ENCODE measurements at regions of chr17 and their contacts with region 1.

Region 1: DNA sequence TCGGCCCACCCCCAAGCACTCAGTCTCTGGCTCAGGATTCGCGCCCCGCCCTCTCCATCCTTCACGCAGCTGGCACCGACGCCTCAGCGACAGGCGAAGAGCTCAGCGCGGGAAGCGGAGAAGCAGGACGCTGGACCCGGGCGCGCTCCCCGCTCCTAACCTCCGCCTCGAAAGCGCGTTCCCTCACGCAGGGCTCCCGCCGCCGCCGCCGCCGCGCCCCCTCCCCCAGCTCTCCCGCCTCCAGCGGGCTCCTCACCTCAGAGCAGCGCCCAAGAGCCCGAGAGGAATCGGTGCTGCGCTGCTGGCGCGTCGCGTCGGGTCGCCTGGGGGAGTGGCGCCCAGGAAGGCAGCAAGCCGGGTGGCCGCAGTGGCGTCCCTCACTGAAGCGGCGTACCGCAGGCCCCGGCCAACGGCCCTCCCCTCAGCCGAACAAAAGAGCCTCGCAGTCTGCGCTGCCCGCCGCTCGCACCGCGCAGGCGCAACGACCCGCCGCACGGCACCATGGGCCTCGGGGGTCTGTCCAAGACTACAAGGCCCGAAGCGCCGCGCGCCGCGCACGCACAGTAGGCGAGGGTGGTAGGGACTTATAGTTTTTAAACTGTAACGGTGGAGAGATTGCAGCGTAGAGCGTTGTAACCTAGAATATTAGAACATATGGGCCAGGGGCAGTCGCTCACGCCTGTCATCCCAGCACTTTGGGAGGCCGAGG is at the start of gene CBX1:
- DNase-seq: peak; percentile 87 to 95 (median 93)
- ATAC-seq: peak; percentile 98
- H3K4me3 ChIP-seq: peak within 1 kb of the TSS; percentile 78
- H3K4me3 Mint-ChIP-seq: peak within 1 kb of the TSS; percentile 83 to 95 (median 91)
- H3K27ac ChIP-seq: peak within 1 kb of the TSS; percentile 68
- H3K27ac Mint-ChIP-seq: peak within 1 kb of the TSS; percentile 78 to 94 (median 89)
- H3K4me1 ChIP-seq: peaks cover 6 to 11% of the 10 kb centered on the region in 2 donors
- H3K4me1 Mint-ChIP-seq: peaks cover 17 to 60% (median 54%) of the 10 kb centered on the region in 7 donors
- H3K27me3 ChIP-seq: no peaks in the 10 kb centered on the region
- H3K27me3 Mint-ChIP-seq: no peaks in the 10 kb centered on the region
- total RNA-seq, gene CBX1: 16.4 to 56.7 (median 33.5) TPM

Region 2: DNA sequence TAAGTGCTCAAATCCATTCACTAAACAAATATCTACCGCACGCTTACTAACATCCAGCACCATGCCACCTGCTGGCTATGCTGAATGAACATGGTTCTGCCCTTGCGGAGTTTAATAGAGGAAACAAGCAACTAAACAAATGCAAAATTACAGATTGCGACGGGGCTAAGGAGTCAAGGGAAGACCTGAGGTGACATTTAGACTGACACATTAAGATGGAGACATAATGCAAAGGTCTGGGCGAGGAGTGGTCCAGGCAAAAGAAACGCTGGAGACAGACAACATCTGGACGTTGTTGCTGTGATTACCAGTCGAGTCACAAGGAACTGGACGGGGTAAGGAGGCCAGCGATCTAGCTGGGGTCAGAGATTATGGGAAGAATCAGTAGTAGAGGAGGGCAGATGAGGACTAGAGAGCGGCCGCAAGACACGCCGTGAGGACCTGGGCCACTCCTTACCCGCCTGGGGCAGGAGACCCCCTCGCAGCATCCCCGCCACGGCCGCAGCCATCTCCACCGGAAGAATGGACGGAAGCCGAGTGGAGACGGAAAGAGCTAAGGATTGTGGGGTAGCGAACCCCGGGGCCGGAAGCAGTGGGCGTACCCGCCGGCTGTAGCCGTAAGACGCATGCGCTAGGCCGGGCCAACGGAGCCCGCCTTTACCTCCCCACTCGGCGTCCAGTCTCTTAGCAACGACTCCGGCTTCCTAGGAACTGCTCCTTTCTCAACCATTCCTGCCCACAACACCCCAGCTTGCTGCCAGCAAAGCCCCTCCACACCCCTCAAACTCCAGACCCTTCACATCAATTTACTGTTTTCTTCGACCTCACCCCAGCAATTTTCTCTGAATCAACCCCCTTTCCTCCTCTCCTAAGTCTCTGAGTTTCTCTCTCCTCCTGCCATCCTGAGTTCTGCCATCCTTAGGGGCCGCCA is 269.9 kb before region 1 on chr17 and contains the starts of genes LRRC46 and MRPL10:
- CTCF ChIA-PET with region 1: no interaction called
- POLR2A ChIA-PET with region 1: no interaction called
- intact Hi-C with region 1: loop called in 1 of 2 experiments (anchors 2 kb)
- DNase-seq: peak; percentile 79 to 96 (median 91)
- ATAC-seq: peak; percentile 88
- H3K4me3 ChIP-seq: peak within 1 kb of the TSS; percentile 99
- H3K4me3 Mint-ChIP-seq: peak within 1 kb of the TSS; percentile 89 to 98 (median 92)
- H3K27ac ChIP-seq: peak within 1 kb of the TSS; percentile 77
- H3K27ac Mint-ChIP-seq: peak within 1 kb of the TSS; percentile 76 to 96 (median 92)
- H3K4me1 ChIP-seq: peaks cover 31 to 38% of the 10 kb centered on the region in 2 donors
- H3K4me1 Mint-ChIP-seq: peaks cover 34 to 79% (median 70%) of the 10 kb centered on the region in 7 donors
- H3K27me3 ChIP-seq: no peaks in the 10 kb centered on the region
- H3K27me3 Mint-ChIP-seq: no peaks in the 10 kb centered on the region
- total RNA-seq, gene LRRC46: 0.20 to 1.7 (median 0.66) TPM
- total RNA-seq, gene MRPL10: 33.6 to 51.2 (median 35.7) TPM

Region 3: GRCh38 chr17:48060249-48060648 is 40.9 kb before region 1 on chr17:
- CTCF ChIA-PET with region 1: no interaction called
- POLR2A ChIA-PET with region 1: no interaction called
- intact Hi-C with region 1: no loop called
- DNase-seq: no peak
- ATAC-seq: no peak
- H3K4me3 ChIP-seq: no peak overlapping the region
- H3K4me3 Mint-ChIP-seq: no peak overlapping the region
- H3K27ac ChIP-seq: no peak overlapping the region
- H3K27ac Mint-ChIP-seq: peak overlapping the region in 1 of 9 donors; percentile 12
- H3K4me1 ChIP-seq: no peaks in the 10 kb centered on the region
- H3K4me1 Mint-ChIP-seq: peaks cover 5 to 19% (median 14%) of the 10 kb centered on the region in 7 donors
- H3K27me3 ChIP-seq: no peaks in the 10 kb centered on the region
- H3K27me3 Mint-ChIP-seq: no peaks in the 10 kb centered on the region

Measured in naive thymus-derived CD4-positive, alpha-beta T cell (primary cell).